AG04449 (cell line): ENCODE measurements at regions of chr10 and their contacts with region 1.

Region 1: DNA sequence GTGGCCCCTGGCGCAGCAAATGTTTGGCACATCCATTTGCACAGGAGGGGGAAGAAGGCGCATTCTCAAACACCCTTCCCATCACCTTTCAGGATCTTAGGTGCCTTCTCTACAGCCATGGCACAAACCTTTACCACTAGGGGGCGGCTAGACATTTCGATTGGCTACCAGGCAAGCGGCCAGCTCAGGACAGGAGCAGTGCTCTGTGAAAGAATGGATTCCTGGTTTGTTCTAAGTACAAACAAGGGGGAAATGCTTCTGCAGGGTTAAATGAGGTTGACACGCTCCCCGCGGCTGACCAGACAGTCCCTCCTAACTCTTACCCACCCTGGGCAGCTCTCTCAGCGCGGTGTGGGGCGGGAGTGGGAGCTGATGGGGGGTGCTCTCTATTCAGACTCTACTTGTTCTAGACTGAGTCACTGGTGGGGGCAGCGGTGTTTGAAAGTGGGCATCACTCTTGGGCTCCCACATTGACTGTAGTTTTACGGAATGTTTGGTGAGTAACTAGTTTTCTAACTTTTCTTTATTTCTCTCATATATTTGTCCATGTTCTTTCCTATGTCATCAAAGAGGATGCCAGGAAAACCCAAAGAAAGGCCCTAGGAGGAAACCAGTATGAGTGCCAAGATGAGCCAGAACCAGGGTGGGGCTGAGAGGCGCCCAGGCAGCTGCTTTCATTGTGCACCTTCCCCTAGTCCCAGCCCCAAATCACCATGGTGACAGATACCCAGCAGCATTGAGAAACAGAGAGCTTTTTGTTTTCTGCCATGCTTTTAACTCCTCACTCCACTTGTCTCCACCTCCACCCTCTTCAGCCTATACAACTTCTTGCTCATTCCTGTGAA is 61.4 kb upstream of the GPR158 start:
- DNase-seq: no peak
- H3K4me3 ChIP-seq: no peak overlapping the region
- CTCF ChIP-seq: peak; percentile 79

Region 2: GRCh38 chr10:25125201-25125611 is 11.8 kb after region 1 on chr10:
- CTCF ChIA-PET with region 1: interaction called, 14 read pairs
- POLR2A ChIA-PET with region 1: no interaction called
- DNase-seq: no peak
- H3K4me3 ChIP-seq: no peak overlapping the region
- CTCF ChIP-seq: no peak

Region 3: GRCh38 chr10:25226775-25227682 is 113.6 kb after region 1 on chr10:
- CTCF ChIA-PET with region 1: interaction called, 24 read pairs
- POLR2A ChIA-PET with region 1: no interaction called
- DNase-seq: no peak
- H3K4me3 ChIP-seq: no peak overlapping the region
- CTCF ChIP-seq: peak; percentile 45

Region 4: DNA sequence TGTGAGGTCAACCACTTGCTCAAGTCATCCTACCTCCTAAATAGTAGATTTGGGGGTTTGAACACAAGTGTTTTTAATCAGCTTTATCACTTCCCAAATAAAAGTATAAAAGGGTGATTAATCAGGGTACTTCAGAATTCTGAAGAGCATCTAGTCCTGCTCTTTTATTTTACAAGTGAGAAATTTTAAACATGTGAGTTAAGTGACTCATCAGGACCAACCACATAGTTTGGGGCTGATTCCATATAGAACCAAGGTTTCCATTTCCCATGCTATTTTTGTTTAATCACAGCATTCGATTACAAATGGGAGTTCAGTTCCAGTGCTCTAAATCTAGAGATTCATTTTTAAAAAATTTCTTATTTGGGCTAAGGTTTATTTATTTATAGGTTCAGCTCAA is 174.8 kb after region 1 on chr10:
- CTCF ChIA-PET with region 1: no interaction called
- POLR2A ChIA-PET with region 1: no interaction called
- DNase-seq: no peak
- H3K4me3 ChIP-seq: no peak overlapping the region
- CTCF ChIP-seq: no peak